Posterior cingulate gyrus (tissue), 11 donors: ENCODE measurements at regions of chr16 and their contacts with region 1.

Region 1: GRCh38 chr16:55465077-55465896 is 13.7 kb upstream of the MMP2 start:
- DNase-seq: peak; percentile 77 to 98 (median 92)

Region 2: DNA sequence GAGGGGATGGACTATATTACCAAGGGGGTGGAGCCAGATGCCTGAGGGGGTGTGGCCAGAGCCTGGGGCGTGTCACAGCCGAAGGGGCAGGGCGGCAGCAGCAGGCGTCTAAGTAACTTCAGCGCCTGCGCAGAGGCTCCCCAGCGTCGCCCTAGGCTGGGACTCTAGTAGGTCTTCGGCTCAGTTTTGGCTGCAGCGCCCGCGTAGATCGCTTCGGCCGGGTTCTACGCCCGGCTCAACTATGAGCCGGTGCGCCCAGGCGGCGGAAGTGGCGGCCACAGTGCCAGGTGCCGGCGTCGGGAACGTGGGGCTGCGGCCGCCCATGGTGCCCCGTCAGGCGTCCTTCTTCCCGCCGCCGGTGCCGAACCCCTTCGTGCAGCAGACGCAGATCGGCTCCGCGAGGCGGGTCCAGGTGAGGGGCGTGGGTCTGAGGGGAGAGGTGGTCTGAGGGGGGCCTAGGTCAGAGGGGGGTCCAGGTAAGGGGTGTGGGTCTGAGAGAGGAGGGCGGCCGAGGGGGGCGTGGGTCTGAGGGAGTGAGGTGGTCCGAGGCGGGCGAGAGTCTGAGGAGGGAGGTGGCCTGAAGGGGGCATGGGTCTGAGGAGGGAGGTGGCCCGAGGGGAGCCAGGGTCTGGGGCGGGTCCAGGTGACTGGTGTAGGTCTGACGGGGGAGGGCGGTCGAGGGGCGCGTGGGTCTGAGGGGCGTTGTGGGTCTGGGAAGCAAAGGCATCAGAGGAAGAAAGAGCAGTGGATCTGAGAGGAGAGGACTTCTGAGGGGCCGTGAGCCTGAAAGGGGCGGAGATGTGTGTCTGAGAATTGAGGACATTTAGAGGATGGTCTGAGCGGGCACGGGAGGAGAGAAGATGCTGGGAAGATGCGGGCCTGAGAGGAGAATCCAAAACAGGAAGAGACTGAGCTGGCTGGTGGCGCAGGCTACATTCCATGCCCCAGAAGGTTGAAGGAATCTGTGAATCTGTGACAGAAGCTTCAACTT is 43.9 kb after region 1 on chr16 and contains the start of gene LPCAT2:
- intact Hi-C with region 1: loop called (anchors 5 kb)
- DNase-seq: peak; percentile 54 to 97 (median 78)

Region 3: DNA sequence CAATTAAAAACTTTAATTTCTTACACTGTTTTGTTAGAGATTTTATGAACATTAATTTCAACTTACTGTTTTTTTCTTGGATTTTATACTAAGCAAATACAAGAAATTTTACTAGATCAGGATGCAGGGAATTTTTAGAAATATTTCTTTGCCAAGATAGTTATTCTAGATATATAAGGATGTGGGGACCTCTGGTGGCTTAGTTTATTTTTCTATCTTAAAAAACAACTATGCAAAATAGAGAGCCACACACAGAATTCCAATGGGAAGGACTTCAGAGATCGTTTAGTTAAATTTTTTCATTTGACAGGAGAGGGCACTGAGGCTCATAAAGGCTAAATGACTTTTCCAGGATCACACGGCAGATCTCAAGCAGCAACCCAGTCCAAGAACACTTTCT is 78.2 kb after region 1 on chr16:
- intact Hi-C with region 1: loop called (anchors 1 kb)
- DNase-seq: no peak

Region 4: DNA sequence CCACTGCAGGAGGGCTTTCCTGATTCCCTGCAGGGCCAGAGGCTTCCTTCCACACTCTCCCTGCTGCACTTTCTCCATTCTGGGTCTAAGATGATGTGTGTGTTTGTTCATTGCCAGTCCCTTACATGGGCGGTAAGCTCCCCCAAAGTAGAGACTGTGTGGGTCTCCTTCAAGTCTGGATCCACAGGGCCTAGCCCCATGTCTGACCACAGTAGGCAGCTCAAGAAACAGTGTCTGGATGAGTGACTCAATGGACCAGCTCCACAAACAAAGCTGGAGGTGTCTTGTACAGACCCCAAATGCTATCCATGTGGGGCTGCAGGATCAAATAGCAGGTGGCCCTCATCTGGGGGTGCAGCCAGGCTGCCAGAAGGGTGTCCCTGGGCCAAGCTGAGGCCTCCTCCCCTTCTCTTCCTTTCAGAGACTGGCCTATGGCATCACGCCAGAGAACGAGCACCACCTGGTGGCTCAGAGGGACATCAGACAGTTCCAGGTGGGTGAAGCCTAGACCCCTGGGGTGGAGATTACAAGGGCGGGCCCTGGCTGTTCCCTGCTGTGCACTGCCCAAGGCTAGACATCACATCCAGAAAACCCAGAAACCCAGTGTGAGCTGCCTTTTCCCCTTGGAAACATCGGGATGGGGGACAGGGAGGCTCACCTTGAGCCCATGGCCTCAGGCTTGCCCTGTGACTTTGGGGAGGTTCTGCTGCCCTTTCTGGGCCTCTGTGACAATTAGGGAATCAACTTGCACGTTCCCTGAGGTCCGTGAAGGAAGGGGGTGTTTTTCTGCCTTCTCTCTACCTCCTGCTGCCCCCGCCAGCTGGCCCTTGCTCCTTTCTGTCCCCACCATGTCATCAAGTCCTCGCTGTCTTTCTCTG is 236.4 kb after region 1 on chr16:
- intact Hi-C with region 1: loop called (anchors 1 kb)
- DNase-seq: peak in 6 of 10 donors; percentile 23 to 91 (median 50)

Region 5: DNA sequence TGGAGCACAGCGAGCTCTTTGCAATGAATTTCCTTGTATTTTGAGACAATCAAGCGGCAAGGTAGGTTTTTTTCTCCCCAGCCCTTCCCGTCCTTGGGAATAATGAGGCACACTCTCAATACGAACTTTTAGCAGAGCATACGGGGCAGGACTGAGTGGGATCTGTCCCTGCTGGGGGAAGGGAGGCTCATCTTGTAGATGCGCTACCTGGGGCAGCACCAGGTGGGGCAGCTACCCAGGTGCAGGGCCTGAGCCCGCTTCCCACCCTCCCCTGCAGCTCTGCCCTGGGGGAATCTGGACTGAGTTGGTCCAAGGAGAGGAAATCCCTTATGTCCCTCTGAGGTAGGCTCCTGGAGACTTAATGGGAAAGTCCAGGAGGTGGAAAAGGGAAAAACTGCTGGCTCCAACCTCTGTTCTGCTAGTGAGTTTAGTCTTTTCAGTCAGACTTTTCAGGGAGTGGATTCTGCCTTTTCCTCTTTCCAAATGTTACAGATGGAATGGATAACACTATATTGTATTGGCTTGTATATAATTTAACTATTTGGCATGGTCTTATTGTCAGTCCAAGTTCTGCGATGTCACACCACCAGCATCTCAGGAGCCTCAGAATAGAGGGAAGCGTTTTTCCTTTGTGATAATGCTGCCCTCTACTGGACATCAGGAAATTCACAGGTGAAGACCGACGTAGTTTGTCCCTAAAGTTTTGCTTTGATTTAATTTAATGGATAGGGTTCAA is 377.2 kb after region 1 on chr16:
- intact Hi-C with region 1: loop called (anchors 2 kb)
- DNase-seq: peak in 3 of 10 donors; percentile 14 to 30 (median 24)